HEK293 (cell line): ENCODE measurements at regions of chr10 and their contacts with region 1.

Region 1: GRCh38 chr10:117496616-117497028 is 45.9 kb upstream of the EMX2 start:
- H3K4me3 ChIP-seq: no peak overlapping the region
- H3K27ac ChIP-seq: no peak overlapping the region
- H3K4me1 ChIP-seq: no peaks in the 10 kb centered on the region
- CTCF ChIP-seq: peak; percentile 83

Region 2: DNA sequence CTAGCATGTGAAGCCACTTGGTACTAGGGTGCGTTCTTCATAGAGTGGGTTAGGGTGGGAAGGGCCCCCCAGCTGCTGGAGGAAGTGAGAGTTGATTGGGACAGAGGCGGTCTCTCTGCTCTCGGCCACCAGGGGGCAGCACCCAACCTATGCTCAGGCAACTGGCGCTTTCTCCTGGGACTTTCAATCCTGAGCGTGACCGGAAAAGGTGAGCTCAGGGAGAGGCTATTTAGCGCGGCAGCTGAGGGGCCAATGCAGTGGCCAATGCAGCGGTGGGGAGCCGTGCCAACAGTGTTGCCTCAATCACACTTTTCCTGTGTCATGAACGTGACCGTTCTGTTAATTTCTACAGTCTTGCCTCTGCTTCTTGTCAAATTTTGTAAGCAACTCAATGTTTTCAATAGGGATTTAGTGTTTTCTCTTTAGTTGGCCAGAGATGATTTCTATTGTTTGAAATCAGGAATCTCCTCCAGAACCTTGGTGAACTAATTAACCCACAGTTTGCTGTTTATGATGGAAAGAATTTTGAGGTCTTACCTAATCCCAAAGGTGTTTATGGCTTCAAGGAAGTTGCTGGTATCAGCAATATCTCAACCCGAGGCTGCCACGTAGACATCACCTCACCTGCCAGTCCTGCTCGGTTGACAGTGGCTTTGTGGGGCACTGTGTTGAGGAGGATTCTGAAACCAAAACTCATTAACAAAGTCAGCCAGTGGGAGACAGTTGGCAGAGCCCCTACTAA is 53.5 kb before region 1 on chr10:
- CTCF ChIA-PET with region 1: interaction called, 30 read pairs
- POLR2A ChIA-PET with region 1: no interaction called
- H3K4me3 ChIP-seq: no peak overlapping the region
- H3K27ac ChIP-seq: no peak overlapping the region
- H3K4me1 ChIP-seq: peaks cover 7% of the 10 kb centered on the region
- CTCF ChIP-seq: peak; percentile 90

Region 3: DNA sequence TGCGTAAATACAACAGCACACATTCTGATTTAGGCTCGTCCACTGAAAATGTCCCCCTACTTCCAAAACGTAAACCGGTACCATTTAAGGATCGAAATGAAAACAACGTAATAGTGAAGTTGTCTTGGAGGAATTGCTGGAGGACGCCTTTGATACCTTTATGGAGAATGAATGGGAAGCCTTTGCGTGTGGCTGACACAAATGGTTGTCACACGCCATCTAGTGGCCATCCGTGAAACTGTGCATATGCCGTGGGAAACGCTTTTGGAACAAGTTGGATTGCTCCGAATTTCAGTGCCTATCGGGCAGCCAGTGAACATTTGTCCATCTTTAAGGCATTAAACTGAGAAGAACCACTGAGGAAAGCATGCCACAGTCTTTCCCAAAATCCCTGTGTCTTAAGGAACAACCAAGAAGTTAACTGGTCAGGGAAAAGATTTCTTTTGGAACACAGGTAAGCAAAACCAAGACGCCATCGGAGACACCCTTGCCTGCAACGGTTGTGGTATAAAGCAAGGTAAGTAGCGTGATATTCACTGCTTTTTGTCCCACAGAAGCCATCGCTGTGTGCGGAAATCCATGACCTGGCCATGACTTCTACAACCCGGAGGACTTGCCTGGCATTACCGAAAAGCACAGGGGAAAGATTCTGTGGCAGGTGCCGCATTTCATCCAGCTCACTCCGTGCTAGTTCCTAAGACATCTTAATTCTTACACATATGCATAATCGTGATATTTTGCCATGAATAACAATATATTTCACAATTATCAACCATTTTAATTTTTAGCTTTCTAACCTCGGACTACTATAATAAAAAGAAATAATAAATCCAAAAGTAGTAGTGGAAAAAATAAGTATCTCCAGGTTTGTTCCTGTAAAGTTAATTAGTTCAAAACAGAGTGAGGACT is 744.9 kb after region 1 on chr10:
- CTCF ChIA-PET with region 1: interaction called, 23 read pairs
- POLR2A ChIA-PET with region 1: no interaction called
- H3K4me3 ChIP-seq: peak overlapping the region; percentile 22
- H3K27ac ChIP-seq: no peak overlapping the region
- H3K4me1 ChIP-seq: no peaks in the 10 kb centered on the region
- CTCF ChIP-seq: peak; percentile 85

Region 4: GRCh38 chr10:118423800-118424479 is 927.3 kb after region 1 on chr10:
- CTCF ChIA-PET with region 1: interaction called, 10 read pairs
- POLR2A ChIA-PET with region 1: no interaction called
- H3K4me3 ChIP-seq: no peak overlapping the region
- H3K27ac ChIP-seq: no peak overlapping the region
- H3K4me1 ChIP-seq: no peaks in the 10 kb centered on the region
- CTCF ChIP-seq: peak; percentile 72